Pancreas (tissue), 10 donors: ENCODE measurements at regions of chr7 and their contacts with region 1.

Region 1: GRCh38 chr7:50637725-50638508 is 72.7 kb upstream of the DDC start:
- DNase-seq: no peak
- ATAC-seq: no peak
- H3K4me3 ChIP-seq: no peak overlapping the region
- H3K27ac ChIP-seq: no peak overlapping the region
- H3K4me1 ChIP-seq: peaks cover 23 to 27% (median 24%) of the 10 kb centered on the region in 3 donors
- H3K27me3 ChIP-seq: no peaks in the 10 kb centered on the region
- CTCF ChIP-seq: no peak

Region 2: GRCh38 chr7:50687575-50688225 is 49.8 kb after region 1 on chr7:
- intact Hi-C with region 1: loop called in 1 of 3 experiments (anchors 2 kb)
- DNase-seq: no peak
- ATAC-seq: peak; percentile 40 to 53 (median 52)
- H3K4me3 ChIP-seq: no peak overlapping the region
- H3K27ac ChIP-seq: peak overlapping the region in 1 of 4 donors; percentile 12
- H3K4me1 ChIP-seq: peaks cover 0 to 35% (median 30%) of the 10 kb centered on the region in 3 donors
- H3K27me3 ChIP-seq: no peaks in the 10 kb centered on the region
- CTCF ChIP-seq: no peak